ENCODE measurements at regions of chr10 and their contacts with region 1.

Region 1: DNA sequence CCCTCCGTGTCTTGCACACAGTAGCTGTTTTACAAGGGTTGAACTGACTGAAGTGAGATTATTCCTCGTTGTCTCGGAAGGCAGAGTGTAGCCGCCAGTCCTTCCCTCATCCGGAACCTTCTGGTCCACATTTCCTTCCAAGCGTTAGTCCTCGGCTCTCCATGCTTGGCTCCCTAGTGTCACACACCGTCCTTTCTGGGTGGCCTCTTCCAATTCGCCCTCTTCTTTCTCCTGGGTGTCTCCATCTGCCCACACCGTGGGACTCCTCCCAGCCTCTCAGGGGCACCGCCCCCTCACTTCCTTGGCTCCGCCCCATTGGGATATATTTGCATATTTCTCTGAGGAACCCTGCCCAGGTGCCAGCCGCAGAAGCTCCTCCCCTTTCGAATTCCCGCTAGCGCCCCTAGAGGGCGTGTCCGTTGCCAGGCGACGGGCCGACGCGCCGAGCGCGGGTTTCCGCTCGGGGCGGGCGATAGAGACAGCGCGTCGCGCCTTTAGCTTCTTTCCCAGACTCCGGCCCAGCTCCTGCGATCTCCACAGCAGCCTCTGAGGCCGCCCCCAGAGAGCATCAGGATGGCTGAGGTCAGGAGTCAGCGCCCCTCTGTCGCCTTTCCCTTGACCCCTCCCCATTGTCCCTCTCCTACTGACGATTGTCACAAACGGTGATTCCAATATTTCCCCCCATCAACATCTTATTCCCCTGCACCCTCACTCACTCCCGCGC is at the start of gene CFAP58:
- DNase-seq: peak; percentile 90
- H3K4me3 ChIP-seq: peak within 1 kb of the TSS; percentile 63
- H3K27ac ChIP-seq: peak within 1 kb of the TSS; percentile 34
- H3K4me1 ChIP-seq: peaks cover 28% of the 10 kb centered on the region
- H3K27me3 ChIP-seq: no peaks in the 10 kb centered on the region
- CTCF ChIP-seq: peak; percentile 80
- total RNA-seq, gene CFAP58: 3.5 TPM

Region 2: GRCh38 chr10:104291439-104291951 is 62.0 kb before region 1 on chr10:
- intact Hi-C with region 1: loop called (anchors 5 kb)
- DNase-seq: peak; percentile 91
- H3K4me3 ChIP-seq: no peak overlapping the region
- H3K27ac ChIP-seq: peak overlapping the region; percentile 13
- H3K4me1 ChIP-seq: peaks cover 26% of the 10 kb centered on the region
- H3K27me3 ChIP-seq: no peaks in the 10 kb centered on the region
- CTCF ChIP-seq: peak; percentile 100

Region 3: GRCh38 chr10:104308439-104308903 is 45.0 kb before region 1 on chr10:
- intact Hi-C with region 1: loop called (anchors 5 kb)
- DNase-seq: no peak
- H3K4me3 ChIP-seq: no peak overlapping the region
- H3K27ac ChIP-seq: peak overlapping the region; percentile 94
- H3K4me1 ChIP-seq: peaks cover 100% of the 10 kb centered on the region
- H3K27me3 ChIP-seq: no peaks in the 10 kb centered on the region
- CTCF ChIP-seq: no peak